ENCODE measurements at regions of chr18 and their contacts with region 1.

Region 1: GRCh38 chr18:50194631-50195532 is at the start of gene MYO5B:
- DNase-seq: no peak
- H3K4me3 ChIP-seq: peak within 1 kb of the TSS; percentile 52 to 72
- H3K27ac ChIP-seq: peak within 1 kb of the TSS; percentile 64
- H3K4me1 ChIP-seq: peaks cover 24% of the 10 kb centered on the region
- H3K27me3 ChIP-seq: no peaks in the 10 kb centered on the region
- CTCF ChIP-seq: peak in 1 of 3 experiments; percentile 54
- POLR2A ChIP-seq: no peak
- total RNA-seq, gene MYO5B: 22.6 TPM

Region 2: DNA sequence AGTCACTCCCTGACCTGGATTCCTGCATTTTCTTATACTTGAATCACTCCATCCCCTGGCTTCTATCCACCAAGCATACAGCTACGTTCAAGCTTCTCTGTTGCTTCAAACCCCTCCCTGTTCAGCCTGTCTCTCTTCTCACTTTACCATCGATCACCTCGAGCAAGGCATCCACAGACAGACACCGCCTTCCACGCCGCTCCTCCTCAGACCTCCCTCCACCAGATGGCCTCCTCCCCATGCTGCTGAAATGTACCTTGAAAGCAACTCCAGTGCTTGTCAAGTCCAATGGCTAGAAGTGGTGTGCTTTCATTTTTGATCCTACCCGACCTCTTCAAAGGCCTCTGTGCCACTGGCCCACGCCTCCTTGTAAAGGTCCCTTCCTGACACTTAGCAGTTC is 250.2 kb before region 1 on chr18:
- intact Hi-C with region 1: loop called (anchors 2 kb)
- DNase-seq: no peak
- H3K4me3 ChIP-seq: no peak overlapping the region
- H3K27ac ChIP-seq: no peak overlapping the region
- H3K4me1 ChIP-seq: no peaks in the 10 kb centered on the region
- H3K27me3 ChIP-seq: no peaks in the 10 kb centered on the region
- CTCF ChIP-seq: peak in 1 of 3 experiments; percentile 45
- POLR2A ChIP-seq: no peak

Region 3: GRCh38 chr18:51029694-51030536 is 835.0 kb after region 1 on chr18 and contains the start of gene SMAD4:
- intact Hi-C with region 1: no loop called
- DNase-seq: peak in 1 of 2 donors; percentile 96
- H3K4me3 ChIP-seq: peak within 1 kb of the TSS; percentile 74 to 79
- H3K27ac ChIP-seq: peak within 1 kb of the TSS; percentile 95
- H3K4me1 ChIP-seq: peaks cover 59% of the 10 kb centered on the region
- H3K27me3 ChIP-seq: no peaks in the 10 kb centered on the region
- CTCF ChIP-seq: no peak
- POLR2A ChIP-seq: peak in 1 of 2 donors; percentile 80
- total RNA-seq, gene SMAD4: 75.1 TPM

Measured in vagina (tissue), 2 donors.